Dorsolateral prefrontal cortex (tissue), 120 donors: ENCODE measurements at regions of chr12 and their contacts with region 1.

Region 1: GRCh38 chr12:10235761-10236631 is 23.3 kb downstream of the GABARAPL1 start:
- DNase-seq: peak in 5 of 10 donors; percentile 30 to 65 (median 46)
- H3K4me3 ChIP-seq: no peak overlapping the region
- H3K27ac ChIP-seq: peak overlapping the region in 1 of 59 donors; percentile 7
- H3K27me3 ChIP-seq: no peaks in the 10 kb centered on the region
- CTCF ChIP-seq: peak; percentile 82 to 98 (median 94)

Region 2: GRCh38 chr12:10182354-10183061 is 53.5 kb before region 1 on chr12:
- intact Hi-C with region 1: no loop called
- DNase-seq: no peak
- H3K4me3 ChIP-seq: no peak overlapping the region
- H3K27ac ChIP-seq: no peak overlapping the region
- H3K27me3 ChIP-seq: peaks cover 0 to 16% (median 0%) of the 10 kb centered on the region in 45 donors
- CTCF ChIP-seq: no peak

Region 3: DNA sequence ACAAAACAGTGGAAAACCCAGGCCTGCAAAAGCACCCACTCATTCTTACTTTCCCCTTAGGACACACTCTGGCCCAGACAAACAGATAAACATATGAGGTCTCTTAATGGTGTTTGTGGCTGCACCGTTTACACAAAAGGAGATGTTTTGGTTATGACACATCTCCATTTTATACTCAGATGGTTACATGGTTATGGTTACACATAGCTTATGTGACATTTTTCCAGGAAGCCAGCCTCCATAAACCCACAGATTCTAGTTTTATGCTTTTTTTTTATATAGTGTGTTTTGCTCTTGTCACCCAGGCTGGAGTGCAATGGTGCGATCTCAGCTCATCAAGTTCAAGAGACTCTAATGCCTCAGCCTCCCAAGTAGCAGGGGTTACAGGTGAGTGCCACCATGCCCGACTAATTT is 68.2 kb after region 1 on chr12:
- intact Hi-C with region 1: no loop called
- DNase-seq: no peak
- H3K4me3 ChIP-seq: no peak overlapping the region
- H3K27ac ChIP-seq: no peak overlapping the region
- H3K27me3 ChIP-seq: no peaks in the 10 kb centered on the region
- CTCF ChIP-seq: no peak

Region 4: DNA sequence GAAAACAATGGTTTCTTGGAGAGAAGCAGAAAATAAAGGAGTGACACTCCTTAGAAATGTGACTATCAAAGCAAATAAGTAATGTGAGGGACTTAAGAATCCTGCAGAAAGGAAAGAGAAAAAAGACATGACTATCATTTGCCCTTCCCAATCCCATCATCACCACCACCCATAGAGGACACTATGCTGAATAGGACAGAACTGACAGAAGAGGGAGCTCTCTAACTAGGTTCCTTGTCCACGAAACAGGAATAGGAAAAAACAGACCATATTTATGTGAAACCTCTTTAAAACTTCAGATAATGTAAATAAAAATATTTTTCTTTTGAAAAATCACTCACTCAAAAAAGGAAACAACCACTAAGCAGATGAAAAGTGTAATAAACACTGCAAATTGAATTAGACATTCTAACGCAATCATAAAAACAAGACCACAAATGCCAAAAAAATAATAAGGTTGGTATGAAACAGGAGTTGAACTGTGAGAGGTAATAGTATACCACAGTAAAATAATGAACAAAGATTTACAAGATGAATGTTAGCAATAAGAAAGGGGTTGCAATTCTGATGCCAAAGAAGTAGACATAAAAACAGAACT is 95.7 kb after region 1 on chr12:
- intact Hi-C with region 1: loop called in 1 of 2 experiments (anchors 5 kb)
- DNase-seq: no peak
- H3K4me3 ChIP-seq: no peak overlapping the region
- H3K27ac ChIP-seq: no peak overlapping the region
- H3K27me3 ChIP-seq: no peaks in the 10 kb centered on the region
- CTCF ChIP-seq: peak in 55 of 56 donors; percentile 24 to 93 (median 78)

Region 5: GRCh38 chr12:10501031-10501430 is 265.0 kb after region 1 on chr12:
- intact Hi-C with region 1: loop called in 1 of 2 experiments (anchors 10 kb)
- DNase-seq: no peak
- H3K4me3 ChIP-seq: no peak overlapping the region
- H3K27ac ChIP-seq: peak overlapping the region in 6 of 59 donors; percentile 0 to 8 (median 4)
- H3K27me3 ChIP-seq: no peaks in the 10 kb centered on the region
- CTCF ChIP-seq: peak in 46 of 56 donors; percentile 12 to 74 (median 46)

Region 6: GRCh38 chr12:10562306-10562933 is 326.4 kb after region 1 on chr12:
- intact Hi-C with region 1: loop called (anchors 2 kb)
- DNase-seq: no peak
- H3K4me3 ChIP-seq: no peak overlapping the region
- H3K27ac ChIP-seq: no peak overlapping the region
- H3K27me3 ChIP-seq: peaks cover 0 to 3% (median 0%) of the 10 kb centered on the region in 45 donors
- CTCF ChIP-seq: peak; percentile 69 to 98 (median 87)

Region 7: GRCh38 chr12:10673660-10674384 is 437.8 kb after region 1 on chr12 and contains the start of gene STYK1:
- intact Hi-C with region 1: loop called (anchors 10 kb)
- DNase-seq: peak in 8 of 10 donors; percentile 32 to 63 (median 52)
- H3K4me3 ChIP-seq: peak within 1 kb of the TSS; percentile 29 to 79 (median 59)
- H3K27ac ChIP-seq: peak within 1 kb of the TSS in 2 of 59 donors; percentile 19 to 31
- H3K27me3 ChIP-seq: peaks cover 0 to 32% (median 3%) of the 10 kb centered on the region in 45 donors
- CTCF ChIP-seq: peak; percentile 54 to 86 (median 72)
- total RNA-seq, gene STYK1: 2.7 to 23.2 (median 10.2) TPM

Region 8: GRCh38 chr12:10749700-10750384 is 513.8 kb after region 1 on chr12:
- intact Hi-C with region 1: loop called in 1 of 2 experiments (anchors 5 kb)
- DNase-seq: peak; percentile 29 to 85 (median 61)
- H3K4me3 ChIP-seq: peak overlapping the region; percentile 16 to 69 (median 49)
- H3K27ac ChIP-seq: peak overlapping the region in 39 of 59 donors; percentile 2 to 84 (median 58)
- H3K27me3 ChIP-seq: peaks cover 0 to 5% (median 0%) of the 10 kb centered on the region in 45 donors
- CTCF ChIP-seq: peak; percentile 91 to 99 (median 98)

Region 9: DNA sequence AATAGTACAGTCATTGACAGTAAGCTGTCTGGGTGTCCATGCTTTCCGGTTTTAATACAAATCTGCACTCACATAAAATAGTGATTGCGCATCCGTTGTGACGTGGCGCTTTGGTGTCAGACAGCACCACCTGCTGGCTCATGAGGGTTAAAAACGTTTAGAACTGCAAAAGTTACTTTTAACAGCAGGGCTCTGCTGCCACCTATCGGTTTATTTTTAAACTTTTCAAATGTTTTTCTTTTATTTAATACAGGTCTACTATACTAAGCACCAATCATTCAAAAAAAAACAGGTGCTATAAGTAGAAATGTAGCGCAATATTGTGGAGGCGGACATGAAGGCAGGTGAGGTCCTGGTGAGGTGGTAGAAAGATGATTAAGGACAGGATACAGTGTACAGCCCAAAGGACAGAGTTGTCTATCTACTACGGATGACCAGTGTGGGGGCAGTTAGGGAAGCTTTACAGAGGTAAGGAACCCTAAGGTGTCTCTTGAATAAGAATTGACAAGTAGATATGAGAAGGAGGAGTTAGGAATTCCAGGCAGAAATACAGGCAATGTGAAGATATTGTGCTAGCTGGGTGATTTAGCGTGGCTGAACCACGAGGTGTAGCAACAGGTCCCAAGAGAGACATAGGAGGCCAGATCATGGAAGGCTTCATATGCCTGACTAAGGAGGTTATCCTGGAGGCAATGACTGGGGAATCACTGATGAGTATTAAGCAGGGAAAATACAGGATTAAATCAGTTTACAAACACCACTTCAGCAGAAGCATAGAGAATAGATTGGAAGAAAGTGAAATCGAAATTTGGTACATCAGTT is 1250.8 kb after region 1 on chr12:
- intact Hi-C with region 1: loop called (anchors 10 kb)
- DNase-seq: peak; percentile 41 to 80 (median 66)
- H3K4me3 ChIP-seq: peak overlapping the region in 25 of 59 donors; percentile 1 to 50 (median 28)
- H3K27ac ChIP-seq: no peak overlapping the region
- H3K27me3 ChIP-seq: no peaks in the 10 kb centered on the region
- CTCF ChIP-seq: peak; percentile 94 to 100 (median 99)